ENCODE measurements at regions of chr16 and their contacts with region 1.

Region 1: DNA sequence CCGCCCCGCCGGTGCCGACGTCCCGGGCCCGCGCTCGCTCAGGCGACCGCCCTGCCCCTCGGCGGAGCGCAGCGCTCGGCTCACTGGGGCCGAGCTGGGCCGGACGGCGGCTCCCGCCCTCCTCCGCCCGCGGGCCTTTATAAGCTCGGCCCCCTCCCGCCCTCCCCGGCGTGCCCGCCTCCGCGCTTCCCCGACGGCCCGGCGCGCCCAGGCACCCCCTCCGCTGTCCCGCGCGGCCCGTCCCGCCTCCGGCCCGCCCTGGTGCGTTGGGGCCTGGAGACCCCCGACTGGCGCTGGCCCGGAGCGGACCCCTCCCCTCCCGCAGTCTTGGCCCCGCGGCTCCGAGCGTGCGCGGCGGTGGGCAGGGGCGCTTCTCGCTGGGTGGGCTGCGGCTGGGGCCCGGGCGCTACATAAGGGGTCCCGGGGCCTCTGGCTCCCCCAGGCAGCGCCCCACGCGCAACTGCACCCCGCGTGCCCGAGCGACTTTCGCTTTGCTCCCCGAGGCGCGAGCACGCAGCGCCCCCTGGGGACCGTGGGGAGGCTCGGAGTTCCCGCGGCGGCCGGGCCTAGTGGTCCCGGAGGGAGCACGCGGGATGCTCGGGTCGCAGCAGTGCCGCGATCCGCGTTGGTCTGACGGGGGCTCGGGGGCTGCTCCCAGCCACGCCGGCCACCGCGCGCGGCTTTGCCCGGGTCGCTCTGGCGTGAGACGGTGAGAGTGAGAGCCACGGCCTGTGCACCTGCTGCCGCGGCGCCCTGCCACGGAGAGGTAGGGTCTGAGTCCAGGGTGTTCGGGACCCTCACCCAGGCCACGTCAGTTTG is at the start of gene PIEZO1:
- DNase-seq: peak; percentile 62 to 93 (median 84)
- ATAC-seq: peak; percentile 52
- H3K4me3 ChIP-seq: peak within 1 kb of the TSS; percentile 58 to 66
- H3K4me3 Mint-ChIP-seq: peak within 1 kb of the TSS; percentile 78
- H3K27ac ChIP-seq: peak within 1 kb of the TSS; percentile 40 to 85
- H3K27ac Mint-ChIP-seq: peak within 1 kb of the TSS; percentile 82
- H3K4me1 ChIP-seq: peaks cover 55% of the 10 kb centered on the region
- H3K4me1 Mint-ChIP-seq: peaks cover 43% of the 10 kb centered on the region
- H3K27me3 ChIP-seq: no peaks in the 10 kb centered on the region
- H3K27me3 Mint-ChIP-seq: no peaks in the 10 kb centered on the region
- CTCF ChIP-seq: peak; percentile 94
- total RNA-seq, gene PIEZO1: 67.4 to 70.1 TPM

Region 2: GRCh38 chr16:88743693-88744576 is 41.4 kb before region 1 on chr16:
- CTCF ChIA-PET with region 1: interaction called, 32 read pairs
- POLR2A ChIA-PET with region 1: interaction called, 4 read pairs
- intact Hi-C with region 1: loop called (anchors 1 kb)
- DNase-seq: peak; percentile 43 to 88 (median 77)
- ATAC-seq: peak; percentile 64
- H3K4me3 ChIP-seq: no peak overlapping the region
- H3K4me3 Mint-ChIP-seq: no peak overlapping the region
- H3K27ac ChIP-seq: no peak overlapping the region
- H3K27ac Mint-ChIP-seq: no peak overlapping the region
- H3K4me1 ChIP-seq: peaks cover 33% of the 10 kb centered on the region
- H3K4me1 Mint-ChIP-seq: peaks cover 25% of the 10 kb centered on the region
- H3K27me3 ChIP-seq: no peaks in the 10 kb centered on the region
- H3K27me3 Mint-ChIP-seq: no peaks in the 10 kb centered on the region
- CTCF ChIP-seq: peak; percentile 89

Region 3: DNA sequence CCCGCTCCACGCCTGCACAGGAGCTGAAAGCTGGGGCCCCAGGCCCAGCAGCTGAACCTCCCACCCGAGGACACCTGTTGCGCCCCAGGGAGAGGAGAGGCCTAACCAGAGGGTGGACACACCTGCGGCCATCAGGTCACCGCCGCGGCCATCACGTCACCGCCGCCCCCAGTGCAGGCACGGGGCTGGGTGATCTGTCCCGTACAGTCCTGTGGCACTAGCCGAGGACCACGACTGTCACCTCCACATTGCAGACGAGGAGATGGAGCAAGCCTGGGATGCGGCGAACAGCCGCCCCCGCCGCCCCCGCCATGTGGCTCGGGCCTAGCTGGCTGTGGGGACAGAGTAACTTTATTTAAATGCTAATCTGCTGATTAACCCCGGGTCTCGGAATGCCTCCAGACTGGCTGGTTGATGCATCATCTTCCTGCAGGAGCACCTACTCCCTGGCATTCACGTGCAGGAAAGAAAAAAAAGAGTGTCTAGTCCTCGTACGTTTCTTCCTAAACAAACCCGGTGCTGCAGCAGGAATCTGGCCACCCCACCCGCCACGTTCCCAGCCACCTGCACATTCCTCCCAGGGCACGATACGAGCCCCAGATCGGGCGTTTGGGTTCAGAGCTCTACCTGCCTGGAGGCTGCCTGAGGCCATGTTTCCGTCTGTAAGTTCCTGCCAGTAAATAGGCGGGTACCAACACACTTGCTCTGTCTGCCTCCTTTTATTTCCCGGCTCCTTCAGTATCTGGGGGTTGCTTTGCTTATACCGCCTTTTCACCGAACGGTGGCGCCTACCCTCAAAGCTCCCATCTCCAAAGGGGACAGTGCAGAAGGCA is 30.2 kb before region 1 on chr16:
- CTCF ChIA-PET with region 1: interaction called, 11 read pairs
- POLR2A ChIA-PET with region 1: no interaction called
- intact Hi-C with region 1: no loop called
- DNase-seq: peak in 1 of 9 experiments; percentile 19
- ATAC-seq: peak; percentile 61
- H3K4me3 ChIP-seq: no peak overlapping the region
- H3K4me3 Mint-ChIP-seq: no peak overlapping the region
- H3K27ac ChIP-seq: no peak overlapping the region
- H3K27ac Mint-ChIP-seq: no peak overlapping the region
- H3K4me1 ChIP-seq: no peaks in the 10 kb centered on the region
- H3K4me1 Mint-ChIP-seq: peaks cover 14% of the 10 kb centered on the region
- H3K27me3 ChIP-seq: no peaks in the 10 kb centered on the region
- H3K27me3 Mint-ChIP-seq: no peaks in the 10 kb centered on the region
- CTCF ChIP-seq: no peak

Region 4: DNA sequence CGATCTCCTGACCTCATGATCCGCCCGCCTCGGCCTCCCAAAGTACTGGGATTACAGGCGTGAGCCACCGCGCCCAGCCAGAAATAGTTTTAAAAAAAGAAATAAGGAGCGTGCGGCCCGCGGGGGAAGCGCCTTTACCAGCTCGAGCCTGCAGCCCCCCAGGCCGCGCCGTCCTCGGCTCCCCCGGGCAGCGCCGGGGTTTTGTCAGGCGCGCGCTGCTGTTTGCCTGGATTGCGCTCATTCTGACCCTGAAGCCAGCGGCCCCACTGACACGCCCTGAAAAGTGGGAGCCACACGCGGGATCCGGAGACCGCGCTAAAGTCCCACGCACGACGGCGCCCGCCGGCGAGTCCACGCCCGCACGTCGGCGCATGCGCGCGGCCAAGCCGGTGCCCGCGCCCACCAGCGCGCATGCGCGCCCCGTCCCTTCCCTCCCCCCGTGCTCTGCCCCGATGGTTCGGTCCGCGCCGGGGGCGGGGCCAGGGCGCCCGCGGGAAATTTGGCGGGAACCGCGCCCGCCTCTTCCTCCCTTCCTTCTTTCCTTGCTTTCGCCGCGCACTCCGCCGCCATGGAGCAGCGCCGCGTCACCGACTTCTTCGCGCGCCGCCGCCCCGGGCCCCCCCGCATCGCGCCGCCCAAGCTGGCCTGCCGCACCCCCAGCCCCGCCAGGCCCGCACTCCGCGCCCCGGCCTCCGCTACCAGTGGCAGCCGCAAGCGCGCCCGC is 18.1 kb after region 1 on chr16 and contains the start of gene CDT1:
- CTCF ChIA-PET with region 1: interaction called, 11 read pairs
- POLR2A ChIA-PET with region 1: interaction called, 4 read pairs
- intact Hi-C with region 1: loop called (anchors 1 to 2 kb)
- DNase-seq: peak; percentile 70 to 94 (median 85)
- ATAC-seq: peak; percentile 68
- H3K4me3 ChIP-seq: peak within 1 kb of the TSS; percentile 59 to 65
- H3K4me3 Mint-ChIP-seq: peak within 1 kb of the TSS; percentile 84
- H3K27ac ChIP-seq: peak within 1 kb of the TSS; percentile 44 to 59
- H3K27ac Mint-ChIP-seq: peak within 1 kb of the TSS; percentile 72
- H3K4me1 ChIP-seq: peaks cover 26% of the 10 kb centered on the region
- H3K4me1 Mint-ChIP-seq: peaks cover 20% of the 10 kb centered on the region
- H3K27me3 ChIP-seq: no peaks in the 10 kb centered on the region
- H3K27me3 Mint-ChIP-seq: no peaks in the 10 kb centered on the region
- CTCF ChIP-seq: no peak
- total RNA-seq, gene CDT1: 1.2 to 2.3 TPM

Region 5: GRCh38 chr16:88811769-88812512 is 26.6 kb after region 1 on chr16 and contains the start of gene APRT:
- CTCF ChIA-PET with region 1: interaction called, 6 read pairs
- POLR2A ChIA-PET with region 1: interaction called, 14 read pairs
- intact Hi-C with region 1: loop called in 1 of 2 experiments (anchors 1 kb)
- DNase-seq: peak; percentile 93 to 99 (median 97)
- ATAC-seq: peak; percentile 90
- H3K4me3 ChIP-seq: peak within 1 kb of the TSS; percentile 75 to 99
- H3K4me3 Mint-ChIP-seq: peak within 1 kb of the TSS; percentile 97
- H3K27ac ChIP-seq: peak within 1 kb of the TSS; percentile 71 to 87
- H3K27ac Mint-ChIP-seq: peak within 1 kb of the TSS; percentile 97
- H3K4me1 ChIP-seq: peaks cover 21% of the 10 kb centered on the region
- H3K4me1 Mint-ChIP-seq: peaks cover 19% of the 10 kb centered on the region
- H3K27me3 ChIP-seq: no peaks in the 10 kb centered on the region
- H3K27me3 Mint-ChIP-seq: no peaks in the 10 kb centered on the region
- CTCF ChIP-seq: no peak
- total RNA-seq, gene APRT: 171 to 178 TPM

Measured in CD8-positive, alpha-beta T cell (primary cell).